CD8-positive, alpha-beta T cell (primary cell): ENCODE measurements at regions of chr2 and their contacts with region 1.

Region 1: GRCh38 chr2:3518496-3519254 is 656 bp downstream of the ADI1 start:
- DNase-seq: peak; percentile 96 to 100 (median 99)
- ATAC-seq: peak; percentile 78
- H3K4me3 ChIP-seq: peak overlapping the region; percentile 80 to 85
- H3K4me3 Mint-ChIP-seq: peak overlapping the region; percentile 90
- H3K27ac ChIP-seq: peak overlapping the region; percentile 84 to 87
- H3K27ac Mint-ChIP-seq: peak overlapping the region; percentile 93
- H3K4me1 ChIP-seq: peaks cover 20% of the 10 kb centered on the region
- H3K4me1 Mint-ChIP-seq: peaks cover 43% of the 10 kb centered on the region
- H3K27me3 ChIP-seq: no peaks in the 10 kb centered on the region
- H3K27me3 Mint-ChIP-seq: no peaks in the 10 kb centered on the region
- CTCF ChIP-seq: no peak

Region 2: GRCh38 chr2:2613279-2614199 is 905.1 kb before region 1 on chr2:
- CTCF ChIA-PET with region 1: no interaction called
- POLR2A ChIA-PET with region 1: no interaction called
- intact Hi-C with region 1: loop called in 1 of 2 experiments (anchors 5 kb)
- DNase-seq: peak; percentile 66 to 93 (median 86)
- ATAC-seq: peak; percentile 99
- H3K4me3 ChIP-seq: peak overlapping the region; percentile 38 to 61
- H3K4me3 Mint-ChIP-seq: peak overlapping the region; percentile 82
- H3K27ac ChIP-seq: peak overlapping the region; percentile 25 to 80
- H3K27ac Mint-ChIP-seq: peak overlapping the region; percentile 91
- H3K4me1 ChIP-seq: peaks cover 7% of the 10 kb centered on the region
- H3K4me1 Mint-ChIP-seq: peaks cover 8% of the 10 kb centered on the region
- H3K27me3 ChIP-seq: no peaks in the 10 kb centered on the region
- H3K27me3 Mint-ChIP-seq: peaks cover 9% of the 10 kb centered on the region
- CTCF ChIP-seq: no peak

Region 3: DNA sequence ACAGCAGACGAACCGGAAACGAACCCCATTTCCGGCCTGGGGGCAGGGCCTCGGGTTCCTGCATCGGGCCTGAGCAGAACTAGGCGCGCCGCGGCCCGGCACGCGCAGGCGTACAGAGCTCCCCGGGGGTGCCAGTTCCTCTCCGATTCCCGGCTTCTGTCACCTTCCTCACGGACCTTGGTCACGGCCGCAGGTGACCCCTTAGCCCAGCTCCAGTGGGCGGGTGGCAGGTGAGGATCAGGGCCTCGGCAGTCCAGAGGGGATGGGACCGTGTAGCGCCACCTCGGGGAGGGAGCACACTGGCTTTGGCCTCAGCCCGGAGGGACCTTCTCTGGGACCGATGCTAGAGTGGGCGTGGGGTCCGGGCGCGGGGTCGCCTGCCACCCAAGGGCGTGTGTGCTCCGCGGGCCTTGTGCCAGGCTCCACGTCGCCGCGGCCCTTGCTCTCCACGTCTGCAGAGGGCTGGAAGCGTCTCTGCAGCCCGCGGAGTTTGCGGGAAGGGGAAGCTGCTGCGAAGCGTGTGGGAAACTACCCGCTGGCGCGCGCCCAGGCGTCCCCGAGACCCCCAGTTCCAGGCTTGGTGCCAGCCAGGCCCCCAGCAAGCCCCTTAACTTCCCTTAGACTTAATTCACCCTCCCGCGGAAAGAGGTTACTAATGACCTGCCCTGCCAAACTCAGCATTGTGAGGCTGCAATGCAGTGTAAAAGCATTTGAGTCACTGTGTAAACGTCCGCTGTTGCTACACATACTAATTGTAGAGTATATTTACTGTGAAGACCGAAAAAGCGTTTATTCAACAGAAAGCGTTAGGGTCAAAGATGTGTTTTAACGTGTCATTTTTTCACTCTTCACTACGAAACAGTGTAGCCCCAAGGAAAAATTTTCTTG is 138.8 kb before region 1 on chr2 and contains the start of gene TRAPPC12:
- CTCF ChIA-PET with region 1: no interaction called
- POLR2A ChIA-PET with region 1: interaction called, 8 read pairs
- intact Hi-C with region 1: loop called (anchors 1 to 2 kb)
- DNase-seq: peak; percentile 86 to 95 (median 92)
- ATAC-seq: peak; percentile 79
- H3K4me3 ChIP-seq: peak within 1 kb of the TSS; percentile 82 to 88
- H3K4me3 Mint-ChIP-seq: peak within 1 kb of the TSS; percentile 97
- H3K27ac ChIP-seq: peak within 1 kb of the TSS; percentile 95
- H3K27ac Mint-ChIP-seq: peak within 1 kb of the TSS; percentile 99
- H3K4me1 ChIP-seq: peaks cover 29% of the 10 kb centered on the region
- H3K4me1 Mint-ChIP-seq: peaks cover 67% of the 10 kb centered on the region
- H3K27me3 ChIP-seq: no peaks in the 10 kb centered on the region
- H3K27me3 Mint-ChIP-seq: no peaks in the 10 kb centered on the region
- CTCF ChIP-seq: peak; percentile 24
- total RNA-seq, gene TRAPPC12: 33.3 to 35.1 TPM

Region 4: DNA sequence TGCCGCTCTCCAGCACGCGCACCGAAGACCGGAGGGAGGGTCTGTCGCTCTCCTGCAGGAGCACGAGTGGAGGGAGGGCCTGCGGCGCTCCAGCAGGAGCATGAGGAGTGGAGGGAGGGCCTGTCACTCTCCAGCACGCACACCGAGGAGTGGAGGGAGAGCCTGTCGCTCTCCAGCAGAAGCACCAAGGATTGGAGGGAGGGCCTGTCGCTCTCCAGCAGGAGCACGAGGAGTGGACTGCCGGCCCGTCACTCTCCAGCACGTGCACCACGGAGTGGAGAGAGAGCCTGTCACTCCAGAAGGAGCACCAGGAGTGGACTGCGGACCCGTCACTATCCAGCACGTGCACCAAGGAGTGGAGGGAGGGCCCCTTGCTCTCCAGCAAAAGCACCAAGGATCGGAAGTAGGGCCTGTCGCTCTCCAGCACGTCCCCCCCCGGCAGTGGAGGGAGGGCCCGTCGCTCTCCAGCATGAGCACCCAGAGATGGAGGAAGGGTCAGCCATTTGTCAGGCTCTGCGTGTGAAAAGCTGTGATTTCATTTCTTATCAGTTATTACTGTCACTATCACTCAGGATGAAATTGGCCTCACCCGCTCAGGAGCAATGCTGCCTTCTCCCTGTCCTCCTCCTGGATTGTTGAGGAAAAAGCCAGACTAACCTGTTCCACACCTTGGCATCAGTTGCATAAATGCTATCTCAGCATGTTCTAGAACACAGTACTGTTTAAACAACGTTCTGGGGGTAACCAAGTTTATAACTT is 35.3 kb before region 1 on chr2:
- CTCF ChIA-PET with region 1: no interaction called
- POLR2A ChIA-PET with region 1: no interaction called
- intact Hi-C with region 1: loop called in 1 of 2 experiments (anchors 5 kb)
- DNase-seq: peak in 2 of 9 experiments; percentile 16 to 73
- ATAC-seq: peak; percentile 94
- H3K4me3 ChIP-seq: no peak overlapping the region
- H3K4me3 Mint-ChIP-seq: peak overlapping the region; percentile 49
- H3K27ac ChIP-seq: no peak overlapping the region
- H3K27ac Mint-ChIP-seq: peak overlapping the region; percentile 22
- H3K4me1 ChIP-seq: no peaks in the 10 kb centered on the region
- H3K4me1 Mint-ChIP-seq: peaks cover 9% of the 10 kb centered on the region
- H3K27me3 ChIP-seq: no peaks in the 10 kb centered on the region
- H3K27me3 Mint-ChIP-seq: no peaks in the 10 kb centered on the region
- CTCF ChIP-seq: no peak

Region 5: GRCh38 chr2:3558205-3559014 is 39.7 kb after region 1 on chr2 and contains the start of gene RNASEH1:
- CTCF ChIA-PET with region 1: no interaction called
- POLR2A ChIA-PET with region 1: interaction called, 26 read pairs
- intact Hi-C with region 1: loop called (anchors 1 kb)
- DNase-seq: peak; percentile 96 to 99 (median 99)
- ATAC-seq: peak; percentile 96
- H3K4me3 ChIP-seq: peak within 1 kb of the TSS; percentile 94 to 96
- H3K4me3 Mint-ChIP-seq: peak within 1 kb of the TSS; percentile 91
- H3K27ac ChIP-seq: peak within 1 kb of the TSS; percentile 94
- H3K27ac Mint-ChIP-seq: peak within 1 kb of the TSS; percentile 96
- H3K4me1 ChIP-seq: peaks cover 20% of the 10 kb centered on the region
- H3K4me1 Mint-ChIP-seq: peaks cover 29% of the 10 kb centered on the region
- H3K27me3 ChIP-seq: no peaks in the 10 kb centered on the region
- H3K27me3 Mint-ChIP-seq: no peaks in the 10 kb centered on the region
- CTCF ChIP-seq: no peak
- total RNA-seq, gene RNASEH1: 31.1 to 34.1 TPM

Region 6: GRCh38 chr2:3575534-3576262 is 57.0 kb after region 1 on chr2:
- CTCF ChIA-PET with region 1: no interaction called
- POLR2A ChIA-PET with region 1: interaction called, 4 read pairs
- intact Hi-C with region 1: loop called (anchors 1 kb)
- DNase-seq: peak in 7 of 9 experiments; percentile 10 to 61 (median 29)
- ATAC-seq: peak; percentile 42
- H3K4me3 ChIP-seq: peak overlapping the region; percentile 69 to 70
- H3K4me3 Mint-ChIP-seq: peak overlapping the region; percentile 89
- H3K27ac ChIP-seq: peak overlapping the region; percentile 87 to 89
- H3K27ac Mint-ChIP-seq: peak overlapping the region; percentile 94
- H3K4me1 ChIP-seq: peaks cover 24% of the 10 kb centered on the region
- H3K4me1 Mint-ChIP-seq: peaks cover 47% of the 10 kb centered on the region
- H3K27me3 ChIP-seq: no peaks in the 10 kb centered on the region
- H3K27me3 Mint-ChIP-seq: no peaks in the 10 kb centered on the region
- CTCF ChIP-seq: no peak